ENCODE measurements at regions of chr5 and their contacts with region 1.

Region 1: GRCh38 chr5:119267958-119268386 is 87.8 kb upstream of the TNFAIP8 start:
- DNase-seq: peak; percentile 91

Region 2: DNA sequence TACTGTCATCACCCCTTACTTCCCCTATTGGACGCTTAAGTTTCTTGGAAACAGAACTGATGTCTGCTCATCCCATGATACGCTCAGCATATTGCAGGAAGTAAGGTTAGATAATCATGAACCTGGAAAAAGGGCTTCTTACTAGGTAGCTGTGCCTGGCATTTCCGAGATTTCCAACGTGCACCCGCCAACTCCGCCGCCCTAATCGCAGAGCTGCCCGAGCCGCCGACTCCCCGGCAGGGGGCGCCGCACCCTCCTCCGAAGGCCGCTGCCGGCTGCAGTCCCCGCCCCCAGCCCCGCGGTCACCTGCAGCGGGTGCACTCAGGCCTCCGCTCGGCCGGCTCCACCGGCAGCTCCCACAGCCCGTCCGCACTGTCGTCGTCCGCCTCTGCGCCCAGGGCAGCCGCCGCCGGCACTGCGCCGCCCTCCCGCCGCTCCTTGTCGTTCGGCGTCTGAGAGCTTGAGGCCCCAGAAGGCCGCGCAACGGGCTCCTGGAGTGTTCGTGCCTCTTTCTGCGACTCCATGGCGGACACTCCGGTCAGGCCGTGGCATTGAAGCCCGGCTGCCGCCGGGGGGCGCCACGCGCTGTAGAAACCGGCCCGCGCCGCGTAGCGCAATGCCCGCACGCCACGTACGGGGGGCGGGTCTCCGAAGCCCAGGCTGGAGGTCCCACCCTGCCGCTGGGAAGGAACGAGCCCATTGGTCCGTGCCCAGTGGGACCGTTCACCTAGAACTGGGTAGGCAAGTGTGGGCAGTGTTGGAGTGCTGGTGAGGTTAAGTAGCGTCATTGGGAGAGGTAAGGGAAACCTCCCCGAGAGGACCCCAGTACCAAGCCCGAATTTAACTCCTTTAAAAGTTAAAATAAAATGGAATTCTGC is 279.7 kb before region 1 on chr5 and contains the start of gene DTWD2:
- intact Hi-C with region 1: loop called (anchors 5 kb)
- DNase-seq: peak; percentile 97
- total RNA-seq, gene DTWD2: 10.1 TPM

Region 3: DNA sequence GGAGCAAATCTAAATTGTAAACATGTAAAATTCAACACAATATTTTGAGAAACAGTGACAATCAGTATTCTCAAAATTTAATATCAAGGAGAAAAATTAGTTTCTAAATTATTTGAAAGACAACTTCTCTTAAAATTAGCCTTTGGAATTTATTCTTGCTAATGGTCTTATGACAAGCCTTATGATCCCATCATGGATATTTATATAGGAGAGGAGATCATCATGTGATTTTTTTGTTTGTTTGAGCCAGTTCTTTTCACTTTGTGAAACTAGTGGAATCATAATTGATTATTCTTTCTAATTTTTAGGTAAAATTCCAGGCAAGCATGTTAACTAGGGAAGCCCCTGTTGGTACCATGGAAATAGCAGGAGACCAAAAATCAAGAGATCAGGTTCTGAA is 172.4 kb before region 1 on chr5:
- intact Hi-C with region 1: no loop called
- DNase-seq: no peak

Region 4: DNA sequence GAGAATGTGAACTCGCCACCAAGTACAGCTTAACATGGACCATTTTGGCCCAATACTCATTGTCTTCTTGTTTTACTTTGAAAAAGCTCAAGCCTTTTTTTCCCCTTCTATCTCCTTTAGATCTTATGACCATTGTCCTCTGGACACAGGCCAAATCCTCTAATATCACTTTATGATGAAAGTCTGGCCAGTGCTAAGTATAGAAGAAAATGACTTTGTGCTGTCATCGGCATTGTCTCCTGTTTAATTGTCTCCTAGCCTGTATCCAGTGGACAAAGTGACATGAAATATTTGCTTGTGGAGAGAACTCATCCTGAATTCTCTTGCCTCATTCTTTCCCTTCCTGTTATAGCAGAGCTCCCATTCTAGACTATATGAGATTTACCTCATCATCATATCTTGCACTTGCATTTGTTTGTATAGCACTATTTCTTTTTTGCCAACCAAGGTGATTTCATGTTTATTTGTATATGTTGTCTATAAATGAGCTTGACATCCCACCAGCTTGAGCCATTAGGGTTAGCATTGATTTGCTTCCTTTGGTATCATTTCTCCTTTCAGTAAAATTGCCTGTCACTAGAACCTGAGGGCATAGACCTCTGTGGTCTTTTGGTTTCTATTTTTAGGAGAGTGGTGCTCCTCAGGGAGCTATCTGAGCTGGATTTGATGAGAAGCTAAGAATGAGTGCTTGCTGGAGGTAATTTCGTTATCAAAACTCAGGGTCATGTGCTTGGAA is 69.0 kb after region 1 on chr5:
- intact Hi-C with region 1: loop called (anchors 5 kb)
- DNase-seq: no peak